ENCODE measurements at regions of chr2 and their contacts with region 1.

Region 1: DNA sequence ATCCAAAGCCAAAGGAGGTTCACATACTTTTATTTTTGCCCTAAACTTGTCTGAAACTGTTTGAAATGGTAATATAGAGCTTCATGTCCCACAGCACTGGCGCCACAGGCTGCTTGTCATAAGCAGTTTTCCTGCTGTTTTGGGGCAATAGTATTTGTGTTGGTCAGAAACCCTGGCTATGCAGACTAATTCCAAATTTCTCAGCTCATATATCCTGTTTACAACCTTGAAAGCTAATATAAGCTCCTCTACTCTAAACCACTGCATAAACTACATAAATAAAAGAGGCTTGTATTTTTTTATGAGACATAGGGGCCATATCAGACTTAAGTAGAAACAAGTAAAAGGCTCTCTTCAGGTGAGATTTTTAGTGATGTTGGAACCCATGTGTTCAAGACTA is 736.8 kb upstream of the ID2 start:
- DNase-seq: no peak
- ATAC-seq: no peak
- H3K4me3 ChIP-seq: no peak overlapping the region
- H3K27ac ChIP-seq: no peak overlapping the region
- H3K4me1 ChIP-seq: no peaks in the 10 kb centered on the region
- H3K27me3 ChIP-seq: peaks cover 0 to 8% (median 0%) of the 10 kb centered on the region in 7 donors
- CTCF ChIP-seq: no peak

Region 2: DNA sequence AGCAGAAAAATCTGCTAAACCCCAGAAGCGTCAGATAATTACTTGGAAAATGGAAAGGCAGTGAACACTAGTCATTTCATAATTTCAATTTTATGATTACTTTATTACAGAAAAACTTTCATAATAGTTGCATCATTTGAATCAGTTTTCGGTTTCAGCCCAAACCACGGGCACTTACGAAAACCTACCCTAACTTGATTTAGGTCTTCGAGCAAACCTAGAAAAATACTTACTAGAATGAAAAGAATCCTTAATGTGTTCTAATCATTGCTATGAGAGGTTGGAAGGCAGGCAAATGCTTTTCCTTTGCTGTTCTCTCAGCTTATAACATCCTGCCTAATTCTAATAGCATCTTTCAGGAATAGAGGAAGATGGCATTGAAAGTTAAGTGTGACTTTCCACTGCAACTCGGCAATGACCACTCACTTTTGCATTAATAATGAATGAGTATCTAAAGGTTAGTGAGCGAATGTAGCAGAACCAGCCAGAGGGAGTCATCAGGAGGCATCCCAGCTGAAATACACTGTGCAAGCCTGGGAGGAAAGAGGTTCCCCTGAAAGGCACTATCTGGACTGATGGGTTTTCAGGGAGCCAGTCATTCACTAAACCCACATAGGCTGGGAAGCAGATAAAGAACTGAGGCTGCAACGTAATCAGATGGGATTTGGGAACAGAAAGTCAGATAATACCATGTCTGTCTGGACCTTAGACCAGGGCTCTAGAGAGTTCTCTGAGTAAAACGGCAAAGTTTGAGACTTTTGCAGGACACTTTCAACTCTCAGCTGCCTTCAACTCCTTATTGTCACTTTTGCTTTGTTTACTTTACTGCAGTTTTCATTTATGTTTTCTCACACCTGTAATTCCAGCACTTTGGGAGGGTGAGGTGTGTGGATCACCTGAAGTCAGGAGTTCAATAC is 507.1 kb before region 1 on chr2:
- intact Hi-C with region 1: loop called in 1 of 10 experiments (anchors 5 kb)
- DNase-seq: no peak
- ATAC-seq: no peak
- H3K4me3 ChIP-seq: no peak overlapping the region
- H3K27ac ChIP-seq: peak overlapping the region in 1 of 10 donors; percentile 64
- H3K4me1 ChIP-seq: peaks cover 0 to 14% (median 0%) of the 10 kb centered on the region in 9 donors
- H3K27me3 ChIP-seq: peaks cover 0 to 15% (median 0%) of the 10 kb centered on the region in 7 donors
- CTCF ChIP-seq: no peak

Region 3: DNA sequence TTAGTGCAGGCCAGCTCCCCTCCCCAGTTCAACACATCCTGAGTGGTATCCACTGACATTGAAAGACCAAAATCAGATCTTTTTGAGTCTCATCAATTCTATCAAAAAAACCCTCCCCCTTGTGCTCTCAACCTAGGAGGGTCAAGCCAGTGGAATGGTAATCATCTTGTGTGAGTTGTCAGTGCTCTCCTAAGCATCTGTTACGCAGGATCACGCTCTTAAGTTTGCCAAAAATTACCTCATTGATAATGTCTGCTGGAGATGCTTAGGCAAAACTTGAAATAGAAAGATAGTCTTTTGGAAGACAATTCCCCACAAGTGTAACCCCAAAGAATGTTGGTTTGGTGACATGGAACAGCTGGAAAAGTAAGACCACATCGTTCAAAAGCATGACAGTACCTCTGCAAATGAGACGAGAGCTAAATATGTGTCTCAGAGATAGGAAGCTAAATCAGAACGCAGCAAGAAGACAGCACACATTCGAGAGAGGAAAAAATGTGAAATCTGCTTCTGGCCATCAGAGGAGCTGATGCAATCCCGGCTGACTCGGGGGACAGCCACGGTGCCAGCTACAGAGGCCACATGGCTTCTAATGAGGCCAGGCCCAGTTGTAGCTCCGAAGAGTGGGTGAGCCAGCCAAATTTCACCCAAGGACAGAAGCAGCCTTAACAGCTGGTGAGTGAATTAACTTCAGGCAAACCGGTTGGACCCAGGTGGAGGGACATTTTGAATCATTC is 274.0 kb before region 1 on chr2:
- intact Hi-C with region 1: no loop called
- DNase-seq: peak; percentile 30 to 60
- ATAC-seq: peak; percentile 68 to 91 (median 76)
- H3K4me3 ChIP-seq: no peak overlapping the region
- H3K27ac ChIP-seq: peak overlapping the region in 2 of 10 donors; percentile 6 to 48
- H3K4me1 ChIP-seq: peaks cover 0 to 20% (median 8%) of the 10 kb centered on the region in 9 donors
- H3K27me3 ChIP-seq: no peaks in the 10 kb centered on the region
- CTCF ChIP-seq: no peak

Region 4: DNA sequence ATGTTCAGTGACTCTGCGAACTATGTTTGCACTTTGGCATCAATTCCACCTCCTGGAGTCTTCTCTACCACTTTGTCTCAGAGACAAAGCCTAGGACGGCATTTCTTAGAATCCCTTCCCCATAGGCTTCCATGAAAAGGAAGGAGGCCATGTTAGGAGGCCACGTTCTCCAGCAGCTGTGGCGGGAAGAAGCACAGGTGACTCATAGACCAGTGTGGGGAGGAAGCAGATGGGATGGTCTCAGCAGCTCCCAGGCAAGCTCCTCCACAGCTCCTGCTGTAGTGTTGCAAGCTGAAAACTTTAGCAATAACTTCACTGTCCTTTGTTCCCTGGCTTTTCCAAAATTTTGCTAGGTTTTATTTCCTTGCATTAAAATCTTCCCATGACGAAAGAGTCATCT is 44.4 kb before region 1 on chr2:
- intact Hi-C with region 1: no loop called
- DNase-seq: no peak
- ATAC-seq: no peak
- H3K4me3 ChIP-seq: no peak overlapping the region
- H3K27ac ChIP-seq: no peak overlapping the region
- H3K4me1 ChIP-seq: peaks cover 0 to 15% (median 0%) of the 10 kb centered on the region in 9 donors
- H3K27me3 ChIP-seq: peaks cover 0 to 3% (median 0%) of the 10 kb centered on the region in 7 donors
- CTCF ChIP-seq: no peak

Measured in heart right ventricle (tissue), 16 donors.